ENCODE measurements at regions of chr12 and their contacts with region 1.

Region 1: DNA sequence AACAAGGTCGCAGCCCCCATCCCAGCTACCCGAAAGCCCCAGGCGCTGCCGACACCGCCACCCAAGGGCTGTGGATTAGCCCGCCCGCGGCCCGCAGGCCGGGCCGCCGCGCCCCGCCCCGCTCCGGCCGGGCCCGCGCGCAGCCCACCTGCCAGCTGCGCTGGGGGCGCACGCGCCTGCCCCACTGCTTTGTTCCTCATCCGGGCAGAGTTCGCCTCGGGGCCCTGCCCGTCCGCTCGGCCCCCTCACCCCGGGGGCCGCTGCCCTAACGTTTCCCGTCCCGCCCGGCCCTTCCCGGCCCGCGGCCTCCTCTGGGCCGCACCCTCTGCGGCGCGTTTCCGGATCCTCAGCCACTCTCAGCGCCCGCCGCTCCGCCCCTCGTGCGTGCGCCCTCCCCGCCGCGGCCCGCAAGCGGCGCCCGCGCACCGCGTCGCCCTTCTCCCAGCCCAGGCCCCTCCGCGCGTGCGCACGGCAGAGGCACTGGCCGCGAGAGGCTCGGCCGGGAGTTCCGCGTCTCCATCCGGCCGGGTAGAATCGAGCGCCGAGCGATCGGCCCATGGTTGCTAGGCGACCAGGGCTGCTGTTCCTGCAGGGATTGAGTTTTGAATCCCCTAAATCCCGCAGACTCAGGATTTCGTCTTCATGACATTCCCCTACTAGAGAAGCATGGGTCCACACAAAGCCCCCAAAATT is at the start of gene PRDM4:
- DNase-seq: peak; percentile 76 to 97 (median 88)
- ATAC-seq: peak; percentile 95
- H3K4me3 ChIP-seq: peak within 1 kb of the TSS; percentile 76 to 82
- H3K4me3 Mint-ChIP-seq: peak within 1 kb of the TSS; percentile 89
- H3K27ac ChIP-seq: peak within 1 kb of the TSS; percentile 80 to 83
- H3K27ac Mint-ChIP-seq: peak within 1 kb of the TSS; percentile 90
- H3K4me1 ChIP-seq: peaks cover 31% of the 10 kb centered on the region
- H3K4me1 Mint-ChIP-seq: peaks cover 44% of the 10 kb centered on the region
- H3K27me3 ChIP-seq: no peaks in the 10 kb centered on the region
- H3K27me3 Mint-ChIP-seq: no peaks in the 10 kb centered on the region
- CTCF ChIP-seq: no peak
- total RNA-seq, gene PRDM4: 44.9 to 46.0 TPM

Region 2: DNA sequence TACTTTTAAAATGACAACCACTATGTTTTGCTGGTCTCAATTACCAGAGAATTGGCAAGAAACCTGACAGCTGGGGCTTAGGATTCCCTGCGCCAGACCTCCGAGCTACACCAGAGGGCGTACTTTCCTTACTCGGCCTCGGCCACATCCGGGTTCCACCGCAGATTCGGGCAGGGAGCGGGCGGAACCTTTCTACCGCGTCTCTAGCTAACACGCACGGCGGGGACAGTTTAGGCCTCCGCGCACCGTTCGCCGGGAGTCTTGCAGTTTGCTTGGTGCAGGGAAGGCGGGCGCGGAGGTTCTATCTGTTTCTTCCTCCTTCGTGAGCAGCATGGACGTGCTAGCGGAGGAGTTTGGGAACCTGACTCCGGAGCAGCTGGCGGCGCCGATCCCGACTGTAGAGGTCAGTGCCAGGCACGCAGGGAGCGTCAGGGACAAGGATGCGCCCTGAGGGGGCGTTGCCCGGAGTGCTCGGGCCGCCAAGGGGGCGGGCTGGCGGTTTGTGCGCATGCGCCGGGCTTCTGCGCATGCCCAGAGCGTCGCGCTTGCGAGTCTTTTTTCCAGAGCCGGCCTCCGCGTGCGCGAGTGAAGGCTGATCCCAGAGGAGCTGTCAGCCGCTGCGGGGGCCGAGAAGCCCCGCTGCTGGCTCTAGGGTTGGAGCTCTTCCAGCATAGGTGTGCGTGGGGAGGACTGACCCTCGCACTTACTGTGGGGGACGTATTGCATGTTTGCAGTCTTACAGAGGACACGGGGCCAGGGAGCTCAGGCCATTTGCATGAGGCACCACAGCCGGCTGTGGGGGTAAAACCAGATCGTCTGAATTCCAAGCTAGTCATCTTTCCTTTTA is 1403.2 kb before region 1 on chr12 and contains the start of gene POLR3B:
- CTCF ChIA-PET with region 1: no interaction called
- POLR2A ChIA-PET with region 1: no interaction called
- intact Hi-C with region 1: loop called in 1 of 2 experiments (anchors 5 kb)
- DNase-seq: peak; percentile 93 to 98 (median 96)
- ATAC-seq: peak; percentile 92
- H3K4me3 ChIP-seq: peak within 1 kb of the TSS; percentile 97
- H3K4me3 Mint-ChIP-seq: peak within 1 kb of the TSS; percentile 91
- H3K27ac ChIP-seq: peak within 1 kb of the TSS; percentile 84 to 90
- H3K27ac Mint-ChIP-seq: peak within 1 kb of the TSS; percentile 90
- H3K4me1 ChIP-seq: peaks cover 13% of the 10 kb centered on the region
- H3K4me1 Mint-ChIP-seq: peaks cover 18% of the 10 kb centered on the region
- H3K27me3 ChIP-seq: no peaks in the 10 kb centered on the region
- H3K27me3 Mint-ChIP-seq: no peaks in the 10 kb centered on the region
- CTCF ChIP-seq: peak; percentile 79
- total RNA-seq, gene POLR3B: 2.5 to 2.6 TPM

Region 3: GRCh38 chr12:107372229-107372658 is 388.7 kb before region 1 on chr12:
- CTCF ChIA-PET with region 1: no interaction called
- POLR2A ChIA-PET with region 1: no interaction called
- intact Hi-C with region 1: no loop called
- DNase-seq: peak in 8 of 9 experiments; percentile 7 to 84 (median 41)
- ATAC-seq: peak; percentile 66
- H3K4me3 ChIP-seq: peak overlapping the region in 1 of 2 experiments; percentile 7
- H3K4me3 Mint-ChIP-seq: peak overlapping the region; percentile 72
- H3K27ac ChIP-seq: peak overlapping the region; percentile 43 to 62
- H3K27ac Mint-ChIP-seq: peak overlapping the region; percentile 89
- H3K4me1 ChIP-seq: peaks cover 74% of the 10 kb centered on the region
- H3K4me1 Mint-ChIP-seq: peaks cover 83% of the 10 kb centered on the region
- H3K27me3 ChIP-seq: no peaks in the 10 kb centered on the region
- H3K27me3 Mint-ChIP-seq: no peaks in the 10 kb centered on the region
- CTCF ChIP-seq: no peak

Region 4: GRCh38 chr12:107685360-107686248 is 75.4 kb before region 1 on chr12 and contains the start of gene PWP1:
- CTCF ChIA-PET with region 1: no interaction called
- POLR2A ChIA-PET with region 1: interaction called, 5 read pairs
- intact Hi-C with region 1: loop called (anchors 1 to 2 kb)
- DNase-seq: peak; percentile 90 to 98 (median 96)
- ATAC-seq: peak; percentile 84
- H3K4me3 ChIP-seq: peak within 1 kb of the TSS; percentile 75 to 82
- H3K4me3 Mint-ChIP-seq: peak within 1 kb of the TSS; percentile 98
- H3K27ac ChIP-seq: peak within 1 kb of the TSS; percentile 74 to 90
- H3K27ac Mint-ChIP-seq: peak within 1 kb of the TSS; percentile 98
- H3K4me1 ChIP-seq: peaks cover 20% of the 10 kb centered on the region
- H3K4me1 Mint-ChIP-seq: peaks cover 34% of the 10 kb centered on the region
- H3K27me3 ChIP-seq: no peaks in the 10 kb centered on the region
- H3K27me3 Mint-ChIP-seq: no peaks in the 10 kb centered on the region
- CTCF ChIP-seq: no peak
- total RNA-seq, gene PWP1: 27.7 to 28.8 TPM

Region 5: GRCh38 chr12:108193917-108194316 is 433.0 kb after region 1 on chr12:
- CTCF ChIA-PET with region 1: no interaction called
- POLR2A ChIA-PET with region 1: no interaction called
- intact Hi-C with region 1: loop called (anchors 5 kb)
- DNase-seq: peak in 5 of 9 experiments; percentile 7 to 32 (median 17)
- ATAC-seq: no peak
- H3K4me3 ChIP-seq: no peak overlapping the region
- H3K4me3 Mint-ChIP-seq: no peak overlapping the region
- H3K27ac ChIP-seq: no peak overlapping the region
- H3K27ac Mint-ChIP-seq: no peak overlapping the region
- H3K4me1 ChIP-seq: no peaks in the 10 kb centered on the region
- H3K4me1 Mint-ChIP-seq: no peaks in the 10 kb centered on the region
- H3K27me3 ChIP-seq: no peaks in the 10 kb centered on the region
- H3K27me3 Mint-ChIP-seq: peaks cover 17% of the 10 kb centered on the region
- CTCF ChIP-seq: peak; percentile 57

Region 6: GRCh38 chr12:109052414-109053323 is 1291.7 kb after region 1 on chr12 and contains the start of gene USP30:
- CTCF ChIA-PET with region 1: no interaction called
- POLR2A ChIA-PET with region 1: no interaction called
- intact Hi-C with region 1: loop called in 1 of 2 experiments (anchors 5 kb)
- DNase-seq: peak; percentile 73 to 93 (median 85)
- ATAC-seq: peak; percentile 74
- H3K4me3 ChIP-seq: peak within 1 kb of the TSS; percentile 85 to 90
- H3K4me3 Mint-ChIP-seq: peak within 1 kb of the TSS; percentile 89
- H3K27ac ChIP-seq: peak within 1 kb of the TSS; percentile 68 to 91
- H3K27ac Mint-ChIP-seq: peak within 1 kb of the TSS; percentile 96
- H3K4me1 ChIP-seq: peaks cover 7% of the 10 kb centered on the region
- H3K4me1 Mint-ChIP-seq: peaks cover 21% of the 10 kb centered on the region
- H3K27me3 ChIP-seq: no peaks in the 10 kb centered on the region
- H3K27me3 Mint-ChIP-seq: no peaks in the 10 kb centered on the region
- CTCF ChIP-seq: no peak
- total RNA-seq, gene USP30: 28.2 to 33.1 TPM

Region 7: GRCh38 chr12:109573029-109573913 is 1812.3 kb after region 1 on chr12 and contains the starts of genes MMAB and MVK:
- CTCF ChIA-PET with region 1: no interaction called
- POLR2A ChIA-PET with region 1: no interaction called
- intact Hi-C with region 1: loop called in 1 of 2 experiments (anchors 5 kb)
- DNase-seq: peak; percentile 96 to 99 (median 98)
- ATAC-seq: peak; percentile 92
- H3K4me3 ChIP-seq: peak within 1 kb of the TSS; percentile 73 to 82
- H3K4me3 Mint-ChIP-seq: peak within 1 kb of the TSS; percentile 95
- H3K27ac ChIP-seq: peak within 1 kb of the TSS; percentile 95
- H3K27ac Mint-ChIP-seq: peak within 1 kb of the TSS; percentile 96
- H3K4me1 ChIP-seq: peaks cover 16% of the 10 kb centered on the region
- H3K4me1 Mint-ChIP-seq: peaks cover 35% of the 10 kb centered on the region
- H3K27me3 ChIP-seq: no peaks in the 10 kb centered on the region
- H3K27me3 Mint-ChIP-seq: no peaks in the 10 kb centered on the region
- CTCF ChIP-seq: no peak
- total RNA-seq, gene MMAB: 10.2 to 11.7 TPM
- total RNA-seq, gene MVK: 11.5 to 13.9 TPM